Panc1 (cell line): ENCODE measurements at regions of chr2 and their contacts with region 1.

Region 1: GRCh38 chr2:19362755-19363473 is 4.5 kb upstream of the OSR1 start:
- DNase-seq: peak; percentile 65
- ATAC-seq: peak; percentile 77
- H3K4me3 ChIP-seq: peak overlapping the region; percentile 38 to 67
- H3K27ac ChIP-seq: peak overlapping the region; percentile 23; the same call in 1 of the 2 replicates
- H3K4me1 ChIP-seq: peaks cover 10% of the 10 kb centered on the region; the same call in 1 of the 2 replicates
- H3K27me3 ChIP-seq: peaks cover 39% of the 10 kb centered on the region
- CTCF ChIP-seq: peak; percentile 85

Region 2: DNA sequence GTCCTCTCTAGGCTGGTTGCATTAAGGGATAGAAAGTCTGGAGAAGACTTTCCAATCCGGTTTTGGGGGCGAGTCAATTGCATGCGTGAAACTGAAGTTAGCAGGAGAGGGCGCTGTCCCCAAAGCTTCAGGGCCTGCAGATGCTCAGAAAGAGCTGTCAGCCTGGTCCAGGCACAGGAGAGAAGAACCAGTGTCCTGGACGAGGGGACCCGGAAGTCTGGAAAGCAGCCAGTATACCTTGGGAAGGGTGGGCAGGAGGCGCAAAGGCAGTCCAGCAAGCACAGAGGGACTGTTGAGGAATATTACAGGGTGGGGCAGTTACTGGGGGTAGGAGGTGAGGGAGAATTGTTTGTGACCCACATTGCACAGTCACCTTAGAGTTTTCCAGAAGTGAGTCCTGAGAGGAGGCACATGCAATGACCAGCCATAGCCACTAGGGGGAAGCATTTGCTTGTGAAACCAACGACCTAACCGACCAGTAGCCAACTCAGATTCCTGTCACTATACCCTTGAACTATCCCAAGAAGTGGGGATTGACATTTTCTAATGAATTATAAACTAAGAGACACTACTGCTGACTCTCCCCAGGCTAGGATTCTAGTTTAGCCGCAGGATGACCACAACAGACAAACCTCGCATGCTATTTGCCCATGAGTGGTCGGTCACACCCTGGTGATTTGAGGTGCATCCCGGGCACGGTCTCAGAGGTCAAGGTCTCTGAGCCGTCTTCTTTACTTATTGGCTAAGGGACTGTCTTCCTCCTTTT is 975.3 kb before region 1 on chr2:
- CTCF ChIA-PET with region 1: no interaction called
- POLR2A ChIA-PET with region 1: no interaction called
- in situ Hi-C with region 1: no loop called
- intact Hi-C with region 1: loop called (anchors 10 kb)
- DNase-seq: peak; percentile 79
- ATAC-seq: peak; percentile 94
- H3K4me3 ChIP-seq: no peak overlapping the region
- H3K27ac ChIP-seq: no peak overlapping the region
- H3K4me1 ChIP-seq: no peaks in the 10 kb centered on the region
- H3K27me3 ChIP-seq: no peaks in the 10 kb centered on the region
- CTCF ChIP-seq: peak; percentile 91

Region 3: GRCh38 chr2:18435421-18436037 is 927.4 kb before region 1 on chr2:
- CTCF ChIA-PET with region 1: no interaction called
- POLR2A ChIA-PET with region 1: no interaction called
- in situ Hi-C with region 1: no loop called
- intact Hi-C with region 1: loop called (anchors 5 kb)
- DNase-seq: peak; percentile 43
- ATAC-seq: peak; percentile 69; the same call in 1 of the 2 replicates
- H3K4me3 ChIP-seq: no peak overlapping the region
- H3K27ac ChIP-seq: no peak overlapping the region
- H3K4me1 ChIP-seq: no peaks in the 10 kb centered on the region
- H3K27me3 ChIP-seq: no peaks in the 10 kb centered on the region
- CTCF ChIP-seq: peak; percentile 71; the same call in 1 of the 2 replicates

Region 4: GRCh38 chr2:18520451-18521425 is 842.2 kb before region 1 on chr2:
- CTCF ChIA-PET with region 1: no interaction called
- POLR2A ChIA-PET with region 1: no interaction called
- in situ Hi-C with region 1: no loop called
- intact Hi-C with region 1: loop called (anchors 2 kb)
- DNase-seq: peak; percentile 50
- ATAC-seq: peak; percentile 95
- H3K4me3 ChIP-seq: no peak overlapping the region; a peak in 1 of 4 replicates
- H3K27ac ChIP-seq: no peak overlapping the region
- H3K4me1 ChIP-seq: peaks cover 3% of the 10 kb centered on the region; the same call in 1 of the 2 replicates
- H3K27me3 ChIP-seq: no peaks in the 10 kb centered on the region; the same call in 1 of the 2 replicates
- CTCF ChIP-seq: peak; percentile 95

Region 5: DNA sequence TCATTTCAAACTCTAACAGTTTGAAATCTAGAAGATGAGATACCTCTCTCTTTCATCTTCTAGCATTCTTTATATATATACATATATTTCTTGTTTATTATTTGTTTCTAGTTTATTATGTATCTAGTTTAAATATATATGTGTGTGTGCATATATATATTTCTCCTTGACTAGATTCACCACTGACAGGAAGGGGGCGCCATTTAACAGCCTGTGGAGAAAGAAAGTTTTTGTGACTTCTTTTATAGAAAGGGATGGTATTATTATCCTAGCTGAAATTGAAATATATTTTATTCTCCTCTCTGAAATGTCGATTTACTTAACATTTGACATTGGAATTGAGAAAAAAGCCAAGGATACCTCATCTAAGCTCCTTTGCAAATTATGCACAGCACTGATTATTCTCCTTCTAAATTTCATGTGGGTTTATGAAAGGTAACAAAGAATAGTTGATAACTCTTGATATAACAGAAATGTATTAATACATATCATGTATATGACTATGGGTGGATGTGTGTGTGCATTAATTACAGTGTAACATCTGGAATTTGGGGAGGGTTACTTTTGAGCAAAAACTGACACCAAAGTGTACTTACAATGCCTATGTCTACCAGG is 612.9 kb before region 1 on chr2:
- CTCF ChIA-PET with region 1: no interaction called
- POLR2A ChIA-PET with region 1: no interaction called
- in situ Hi-C with region 1: no loop called
- intact Hi-C with region 1: loop called (anchors 2 kb)
- DNase-seq: no peak
- ATAC-seq: no peak
- H3K4me3 ChIP-seq: no peak overlapping the region
- H3K27ac ChIP-seq: no peak overlapping the region
- H3K4me1 ChIP-seq: 0 out of 2 replicates have a peak, but pooled peaks cover 9% of the 10 kb centered on the region
- H3K27me3 ChIP-seq: no peaks in the 10 kb centered on the region
- CTCF ChIP-seq: peak; percentile 75; the same call in 1 of the 2 replicates

Region 6: DNA sequence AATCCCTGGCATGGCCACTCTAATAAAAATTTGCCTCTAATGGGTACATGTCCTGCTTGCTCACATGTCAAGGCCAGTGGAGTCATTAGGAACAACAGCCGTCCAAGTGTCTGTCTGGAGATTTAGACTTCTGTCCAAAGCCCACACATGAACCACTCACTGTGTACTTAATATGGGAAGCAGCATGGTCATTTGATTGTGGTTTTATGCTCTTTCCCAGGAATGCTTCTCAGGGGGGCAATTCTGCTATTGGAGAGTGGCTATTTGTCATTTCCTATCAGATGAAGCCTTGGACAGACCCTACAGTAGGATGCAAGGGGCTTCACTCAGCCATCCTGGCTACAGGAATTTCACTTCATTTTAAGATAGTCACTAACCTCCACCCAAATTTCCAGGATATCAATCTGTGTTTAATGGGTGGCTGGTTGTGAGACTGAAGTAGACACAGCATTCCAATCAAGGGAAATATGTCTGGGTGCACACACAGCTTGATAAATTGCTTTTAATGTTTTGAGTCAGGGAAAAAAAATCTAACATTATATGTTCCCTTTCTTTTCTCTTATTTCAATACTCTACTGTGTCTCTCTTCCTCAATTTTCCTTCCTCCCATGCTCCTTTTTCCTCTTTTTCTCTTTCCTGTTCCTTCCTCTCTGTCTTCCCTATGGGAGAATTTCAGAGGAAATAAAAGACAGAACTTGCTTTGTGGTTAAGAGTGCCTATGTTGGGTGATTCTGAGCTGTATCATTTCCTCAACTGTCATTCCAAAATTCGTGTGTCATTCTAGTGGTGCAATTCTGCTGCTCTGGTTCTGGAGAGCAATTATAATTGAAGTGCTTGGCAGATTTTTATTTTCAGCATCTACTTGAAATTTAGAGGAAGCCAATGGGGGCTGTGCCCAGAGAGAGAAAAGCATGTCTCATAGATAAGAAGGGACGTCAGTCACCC is 324.6 kb before region 1 on chr2:
- CTCF ChIA-PET with region 1: no interaction called
- POLR2A ChIA-PET with region 1: no interaction called
- in situ Hi-C with region 1: no loop called
- intact Hi-C with region 1: no loop called
- DNase-seq: no peak
- ATAC-seq: no peak
- H3K4me3 ChIP-seq: no peak overlapping the region
- H3K27ac ChIP-seq: no peak overlapping the region
- H3K4me1 ChIP-seq: no peaks in the 10 kb centered on the region
- H3K27me3 ChIP-seq: no peaks in the 10 kb centered on the region
- CTCF ChIP-seq: no peak

Region 7: GRCh38 chr2:19377717-19378116 is 14.8 kb after region 1 on chr2:
- CTCF ChIA-PET with region 1: no interaction called
- POLR2A ChIA-PET with region 1: no interaction called
- in situ Hi-C with region 1: no loop called
- intact Hi-C with region 1: no loop called
- DNase-seq: no peak
- ATAC-seq: no peak
- H3K4me3 ChIP-seq: no peak overlapping the region
- H3K27ac ChIP-seq: no peak overlapping the region
- H3K4me1 ChIP-seq: no peaks in the 10 kb centered on the region
- H3K27me3 ChIP-seq: no peaks in the 10 kb centered on the region; the same call in 1 of the 2 replicates
- CTCF ChIP-seq: peak; percentile 10; the same call in 1 of the 2 replicates

Region 8: DNA sequence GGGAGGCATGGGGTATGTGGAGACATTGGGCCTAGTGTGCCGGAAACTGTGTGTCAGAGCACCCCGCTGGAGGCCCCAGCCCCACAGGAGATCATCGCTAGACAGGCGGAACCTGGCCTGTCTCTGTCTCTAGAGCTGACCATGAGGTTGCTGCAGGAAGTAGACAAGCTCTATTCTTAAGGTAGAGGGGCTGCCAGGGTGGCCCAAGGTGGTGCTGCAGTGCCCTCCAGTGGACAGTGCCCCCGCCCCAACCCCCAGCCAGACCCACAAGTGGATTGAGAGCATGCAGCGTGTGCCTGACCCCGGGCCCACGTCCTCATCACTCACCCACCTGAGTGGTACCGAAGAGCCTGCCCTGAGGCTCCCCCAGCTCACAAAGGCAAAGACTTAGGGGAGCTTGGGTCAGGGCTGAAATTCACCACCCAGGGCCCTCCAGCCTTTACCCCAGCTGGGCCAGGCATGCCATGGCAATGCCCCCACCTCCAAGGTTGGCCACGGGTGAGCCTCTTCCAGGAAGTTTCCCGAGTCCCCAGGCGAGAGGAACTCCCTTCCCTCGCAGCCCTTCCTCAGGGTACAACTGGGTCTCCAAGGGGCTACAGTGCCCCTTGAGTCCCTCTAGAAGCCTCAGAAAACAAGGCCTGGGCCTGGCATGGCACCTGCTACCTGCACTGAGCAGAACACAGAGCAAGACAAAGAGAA is 383.8 kb after region 1 on chr2:
- CTCF ChIA-PET with region 1: no interaction called
- POLR2A ChIA-PET with region 1: no interaction called
- in situ Hi-C with region 1: no loop called
- intact Hi-C with region 1: loop called (anchors 10 kb)
- DNase-seq: no peak
- ATAC-seq: peak; percentile 57; the same call in 1 of the 2 replicates
- H3K4me3 ChIP-seq: no peak overlapping the region
- H3K27ac ChIP-seq: no peak overlapping the region
- H3K4me1 ChIP-seq: no peaks in the 10 kb centered on the region
- H3K27me3 ChIP-seq: no peaks in the 10 kb centered on the region
- CTCF ChIP-seq: peak; percentile 54; the same call in 1 of the 2 replicates

Region 9: DNA sequence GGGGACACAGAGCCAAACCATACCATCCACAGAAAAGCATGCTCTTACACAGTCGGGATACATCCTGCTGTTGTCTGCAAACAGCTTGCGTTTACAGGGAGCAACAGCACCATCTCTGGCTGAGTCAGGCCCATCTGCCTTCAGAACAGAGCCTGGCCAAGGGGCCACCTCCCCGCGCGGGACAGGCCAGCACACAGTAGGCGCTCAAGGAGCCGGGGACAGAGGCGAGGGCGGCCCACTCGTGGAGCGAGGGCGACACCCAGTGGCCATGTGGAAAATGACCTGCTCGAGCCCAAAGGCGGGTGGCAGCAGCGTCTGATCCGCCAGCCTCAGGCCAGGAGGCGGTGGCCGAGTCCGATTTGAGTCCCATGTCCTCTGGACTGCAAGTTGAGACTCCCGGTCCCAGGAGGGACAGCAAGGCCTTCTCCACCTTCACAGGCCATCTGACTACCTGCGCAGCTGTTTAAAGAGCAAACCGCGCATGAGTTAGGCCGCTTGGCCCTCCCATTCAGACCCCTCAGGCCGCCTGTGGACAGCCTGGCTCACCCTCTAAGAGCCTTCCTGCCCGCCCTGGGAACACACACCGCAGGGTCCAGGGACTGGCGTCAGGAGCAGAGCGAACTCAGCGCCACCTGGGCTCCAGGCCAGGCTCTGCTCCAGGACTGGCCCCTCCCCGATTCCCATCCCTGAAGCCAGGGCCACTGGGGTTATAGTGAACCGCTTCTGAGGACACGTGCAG is 500.6 kb after region 1 on chr2:
- CTCF ChIA-PET with region 1: interaction called, 6 read pairs
- POLR2A ChIA-PET with region 1: no interaction called
- in situ Hi-C with region 1: no loop called
- intact Hi-C with region 1: loop called (anchors 5 kb)
- DNase-seq: peak; percentile 27
- ATAC-seq: peak; percentile 92
- H3K4me3 ChIP-seq: peak overlapping the region in 1 of 2 experiments; percentile 43; a peak in 2 of 4 replicates
- H3K27ac ChIP-seq: peak overlapping the region; percentile 57
- H3K4me1 ChIP-seq: 0 out of 2 replicates have a peak, but pooled peaks cover 2% of the 10 kb centered on the region
- H3K27me3 ChIP-seq: no peaks in the 10 kb centered on the region
- CTCF ChIP-seq: peak; percentile 95